ENCODE measurements at regions of chr3 and their contacts with region 1.

Region 1: GRCh38 chr3:5026331-5027218 is 47.3 kb downstream of the BHLHE40 start:
- DNase-seq: peak; percentile 72
- CTCF ChIP-seq: peak; percentile 72

Region 2: DNA sequence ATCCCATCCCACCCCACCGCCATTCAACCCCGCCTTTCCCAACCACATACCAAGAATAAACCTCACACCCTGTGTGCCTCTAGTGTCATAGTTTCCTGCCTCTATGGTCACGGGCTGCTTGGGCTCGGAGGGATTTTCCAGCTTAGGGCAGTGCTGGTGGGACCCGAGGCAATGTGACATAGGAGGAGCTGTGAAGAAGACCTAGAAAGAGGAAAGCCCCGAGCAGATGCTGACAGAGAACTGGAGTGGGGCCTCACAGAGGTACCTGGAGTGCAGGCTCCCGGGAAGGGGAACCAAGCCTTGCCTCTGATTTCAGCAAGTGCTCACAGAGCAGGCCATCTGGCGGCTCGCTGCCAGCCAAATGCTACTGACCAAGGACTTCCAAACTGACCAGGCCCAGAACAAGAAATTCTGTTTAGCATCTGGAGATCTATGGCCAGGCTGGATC is 19.8 kb before region 1 on chr3:
- CTCF ChIA-PET with region 1: interaction called, 21 read pairs
- POLR2A ChIA-PET with region 1: interaction called, 6 read pairs
- DNase-seq: peak; percentile 84
- CTCF ChIP-seq: peak; percentile 11

Region 3: GRCh38 chr3:5016218-5017161 is 10.1 kb before region 1 on chr3:
- CTCF ChIA-PET with region 1: interaction called, 21 read pairs
- POLR2A ChIA-PET with region 1: interaction called, 4 read pairs
- DNase-seq: peak; percentile 54
- CTCF ChIP-seq: no peak

Region 4: GRCh38 chr3:5041315-5041714 is 14.7 kb after region 1 on chr3:
- CTCF ChIA-PET with region 1: interaction called, 20 read pairs
- POLR2A ChIA-PET with region 1: no interaction called
- DNase-seq: no peak
- CTCF ChIP-seq: no peak

Region 5: DNA sequence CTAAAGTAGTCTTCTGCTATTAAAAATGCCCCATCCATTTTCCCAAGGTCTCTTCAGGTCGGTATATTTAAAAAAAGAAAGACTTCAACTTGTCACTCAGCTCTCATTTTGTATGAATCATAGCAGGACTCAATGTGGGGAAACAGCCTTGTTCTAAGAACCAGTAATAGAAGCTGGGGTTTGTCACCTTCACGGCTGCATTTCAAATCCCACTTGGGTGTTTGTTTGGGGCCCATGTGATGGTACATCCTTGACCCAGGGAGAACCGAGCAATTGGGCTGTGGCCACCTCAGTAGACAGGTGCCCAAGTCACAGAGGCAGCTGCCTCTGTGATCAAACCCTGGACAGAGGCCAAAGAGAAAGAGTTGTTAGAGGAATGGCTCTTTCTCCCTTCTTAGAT is 25.2 kb after region 1 on chr3:
- CTCF ChIA-PET with region 1: interaction called, 10 read pairs
- POLR2A ChIA-PET with region 1: interaction called, 4 read pairs
- DNase-seq: peak; percentile 42
- CTCF ChIP-seq: no peak

Region 6: DNA sequence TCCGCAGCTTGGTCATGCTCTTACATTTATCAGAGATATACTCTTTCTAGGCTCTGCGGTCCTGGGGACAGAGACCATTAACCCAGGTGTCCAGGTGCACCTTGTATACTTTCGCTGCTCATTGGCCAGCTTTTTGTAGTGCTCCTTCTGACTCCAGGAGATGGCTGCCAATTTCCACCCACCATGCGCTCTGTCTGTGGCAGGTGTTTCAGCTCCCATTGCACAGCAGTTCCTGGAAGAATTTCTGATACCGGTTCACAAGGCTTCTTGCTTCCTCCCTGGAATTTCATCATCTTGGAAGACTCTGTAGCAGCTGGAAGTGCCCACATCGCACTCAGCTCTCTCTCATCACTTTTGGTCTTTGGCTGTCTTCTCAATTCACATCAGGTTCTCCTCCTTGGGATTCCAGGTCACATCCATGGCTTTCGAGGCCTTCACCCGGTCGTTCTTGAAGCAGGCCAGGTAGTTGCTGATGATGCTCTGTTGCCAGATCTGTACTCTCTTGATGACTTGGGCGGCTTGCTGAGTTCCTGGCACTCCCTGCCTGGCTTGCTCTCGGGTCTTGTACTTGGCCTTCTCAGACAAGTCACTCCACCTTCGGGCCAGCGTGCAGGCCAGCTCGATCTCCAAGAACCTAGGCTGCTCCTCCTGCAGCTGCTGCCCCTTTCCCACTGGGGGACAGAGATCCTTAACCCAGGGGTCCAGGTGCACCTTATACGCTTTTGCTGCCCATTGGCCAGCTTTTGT is 54.4 kb after region 1 on chr3:
- CTCF ChIA-PET with region 1: no interaction called
- POLR2A ChIA-PET with region 1: no interaction called
- DNase-seq: no peak
- CTCF ChIP-seq: no peak